Activated naive CD4-positive, alpha-beta T cell treated with anti-CD3 and anti-CD28 coated beads for 36 hours (primary cell): ENCODE measurements at regions of chr2 and their contacts with region 1.

Region 1: DNA sequence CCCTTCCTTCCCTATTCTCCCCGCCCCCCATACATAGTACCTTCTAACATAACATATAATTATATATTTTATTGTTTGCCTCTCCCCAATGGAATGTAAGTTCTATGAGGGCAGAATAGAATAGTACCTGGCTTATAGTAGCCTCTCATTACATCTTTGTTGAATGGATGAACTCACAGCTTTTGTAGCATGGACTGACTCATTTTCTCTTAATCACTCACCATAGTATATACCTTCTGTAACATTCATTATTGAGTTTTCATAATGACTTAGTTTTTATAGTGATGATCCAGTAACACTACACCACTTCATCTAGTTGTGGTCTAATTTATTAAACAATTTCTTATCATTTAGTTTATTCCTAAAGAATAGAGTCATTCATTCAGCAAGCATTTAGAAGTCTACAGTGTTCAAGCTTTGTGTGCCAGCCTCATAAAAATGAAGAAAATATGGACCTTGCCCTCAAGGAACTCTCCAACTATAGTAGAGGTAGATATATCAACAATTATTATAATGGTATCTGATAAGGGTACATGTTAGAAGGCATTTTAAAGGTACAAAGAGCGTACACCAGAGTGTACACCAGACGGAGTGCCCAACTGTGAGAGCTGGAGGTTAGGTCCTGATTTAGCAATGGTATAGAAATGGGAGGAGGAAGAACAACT is 31.1 kb downstream of the NCOA1 start:
- DNase-seq: no peak
- H3K4me3 Mint-ChIP-seq: no peak overlapping the region
- H3K27ac Mint-ChIP-seq: peak overlapping the region; percentile 71
- H3K4me1 Mint-ChIP-seq: peaks cover 38% of the 10 kb centered on the region
- H3K27me3 Mint-ChIP-seq: no peaks in the 10 kb centered on the region

Region 2: DNA sequence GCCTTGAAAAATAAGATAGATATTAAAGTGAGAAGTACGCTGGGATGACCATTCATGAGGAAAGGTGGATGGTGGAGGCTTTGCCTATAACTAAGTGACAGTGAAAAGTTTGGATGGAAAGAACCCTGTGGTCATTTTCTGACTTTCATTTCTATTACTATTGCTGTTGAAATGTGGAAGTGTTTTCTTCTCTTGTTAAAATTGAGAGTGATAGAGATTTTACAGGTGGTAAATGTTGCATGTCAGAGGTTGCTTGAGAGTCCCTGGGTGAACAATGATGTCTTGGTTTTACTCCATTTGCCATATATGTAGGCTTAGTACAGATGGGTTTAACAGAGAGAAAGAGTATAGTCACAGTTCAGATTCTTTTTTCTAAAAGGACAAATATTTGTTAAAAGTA is 12.7 kb before region 1 on chr2:
- CTCF ChIA-PET with region 1: interaction called, 6 read pairs
- intact Hi-C with region 1: loop called (anchors 1 kb)
- DNase-seq: no peak
- H3K4me3 Mint-ChIP-seq: no peak overlapping the region
- H3K27ac Mint-ChIP-seq: no peak overlapping the region
- H3K4me1 Mint-ChIP-seq: peaks cover 68% of the 10 kb centered on the region
- H3K27me3 Mint-ChIP-seq: no peaks in the 10 kb centered on the region

Region 3: DNA sequence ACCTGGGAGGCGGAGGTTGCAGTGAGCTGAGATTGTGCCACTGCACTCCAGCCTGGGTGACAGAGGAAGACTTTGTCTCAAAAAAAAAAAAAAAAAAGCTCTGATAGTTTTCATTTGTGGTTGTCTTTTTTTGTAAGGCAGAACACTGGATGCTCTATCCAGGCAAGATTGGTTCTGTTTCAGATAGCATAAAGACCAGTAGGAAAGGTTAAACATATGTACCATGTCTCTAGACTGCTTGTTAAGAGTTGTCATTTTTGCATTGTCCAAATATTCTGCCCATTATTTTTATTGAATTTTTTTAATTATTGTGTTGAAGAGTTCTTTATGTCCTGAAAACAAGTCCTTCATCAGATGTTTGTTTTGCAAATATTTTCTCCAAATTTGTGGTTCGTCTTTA is 28.9 kb after region 1 on chr2:
- CTCF ChIA-PET with region 1: no interaction called
- intact Hi-C with region 1: loop called (anchors 2 kb)
- DNase-seq: no peak
- H3K4me3 Mint-ChIP-seq: no peak overlapping the region
- H3K27ac Mint-ChIP-seq: no peak overlapping the region
- H3K4me1 Mint-ChIP-seq: peaks cover 10% of the 10 kb centered on the region
- H3K27me3 Mint-ChIP-seq: no peaks in the 10 kb centered on the region

Region 4: DNA sequence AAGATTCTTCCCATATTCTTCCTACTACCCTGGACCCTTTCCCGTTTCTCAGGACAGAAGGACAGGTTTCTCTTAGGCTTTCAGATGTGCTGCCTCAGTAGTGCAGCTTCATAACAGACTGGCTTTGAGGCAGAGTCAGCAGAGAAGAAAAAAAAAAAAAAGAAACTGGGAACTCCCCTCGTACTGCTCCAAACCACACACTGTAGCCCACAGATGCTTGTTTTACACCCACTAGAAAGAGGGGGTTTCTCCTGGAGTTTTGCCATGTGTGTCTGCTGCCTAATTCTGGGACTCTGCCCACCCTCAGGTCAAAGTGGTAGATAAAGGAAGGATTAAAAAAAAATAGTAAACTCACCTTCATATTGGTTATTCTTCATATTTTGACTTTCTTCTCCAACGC is 64.8 kb after region 1 on chr2:
- CTCF ChIA-PET with region 1: no interaction called
- intact Hi-C with region 1: loop called (anchors 2 kb)
- DNase-seq: peak; percentile 60
- H3K4me3 Mint-ChIP-seq: no peak overlapping the region
- H3K27ac Mint-ChIP-seq: no peak overlapping the region
- H3K4me1 Mint-ChIP-seq: peaks cover 27% of the 10 kb centered on the region
- H3K27me3 Mint-ChIP-seq: no peaks in the 10 kb centered on the region

Region 5: GRCh38 chr2:25098670-25099486 is 576.8 kb after region 1 on chr2:
- CTCF ChIA-PET with region 1: no interaction called
- intact Hi-C with region 1: loop called (anchors 5 kb)
- DNase-seq: no peak
- H3K4me3 Mint-ChIP-seq: no peak overlapping the region
- H3K27ac Mint-ChIP-seq: no peak overlapping the region
- H3K4me1 Mint-ChIP-seq: peaks cover 17% of the 10 kb centered on the region
- H3K27me3 Mint-ChIP-seq: peaks cover 3% of the 10 kb centered on the region